ENCODE measurements at regions of chr7 and their contacts with region 1.

Region 1: GRCh38 chr7:37853474-37853873 is 5.1 kb downstream of the NME8 start:
- DNase-seq: peak; percentile 44
- H3K4me3 Mint-ChIP-seq: no peak overlapping the region
- H3K27ac Mint-ChIP-seq: no peak overlapping the region
- H3K4me1 Mint-ChIP-seq: no peaks in the 10 kb centered on the region
- H3K27me3 Mint-ChIP-seq: peaks cover 22% of the 10 kb centered on the region
- CTCF ChIP-seq: peak; percentile 62

Region 2: GRCh38 chr7:37510043-37510634 is 343.3 kb before region 1 on chr7:
- CTCF ChIA-PET with region 1: no interaction called
- POLR2A ChIA-PET with region 1: no interaction called
- intact Hi-C with region 1: loop called (anchors 5 kb)
- DNase-seq: peak; percentile 51
- H3K4me3 Mint-ChIP-seq: no peak overlapping the region
- H3K27ac Mint-ChIP-seq: no peak overlapping the region
- H3K4me1 Mint-ChIP-seq: no peaks in the 10 kb centered on the region
- H3K27me3 Mint-ChIP-seq: no peaks in the 10 kb centered on the region
- CTCF ChIP-seq: peak; percentile 63

Region 3: GRCh38 chr7:37531225-37531624 is 322.2 kb before region 1 on chr7:
- CTCF ChIA-PET with region 1: no interaction called
- POLR2A ChIA-PET with region 1: no interaction called
- intact Hi-C with region 1: no loop called
- DNase-seq: no peak
- H3K4me3 Mint-ChIP-seq: no peak overlapping the region
- H3K27ac Mint-ChIP-seq: no peak overlapping the region
- H3K4me1 Mint-ChIP-seq: peaks cover 9% of the 10 kb centered on the region
- H3K27me3 Mint-ChIP-seq: no peaks in the 10 kb centered on the region
- CTCF ChIP-seq: no peak

Measured in MCF 10A (cell line).